CD8-positive, alpha-beta T cell (primary cell): ENCODE measurements at regions of chr12 and their contacts with region 1.

Region 1: GRCh38 chr12:7018350-7019042 is at the start of gene LPCAT3:
- DNase-seq: peak; percentile 94 to 99 (median 97)
- ATAC-seq: peak; percentile 97
- H3K4me3 ChIP-seq: peak within 1 kb of the TSS; percentile 82 to 99
- H3K4me3 Mint-ChIP-seq: peak within 1 kb of the TSS; percentile 90
- H3K27ac ChIP-seq: peak within 1 kb of the TSS; percentile 79 to 92
- H3K27ac Mint-ChIP-seq: peak within 1 kb of the TSS; percentile 88
- H3K4me1 ChIP-seq: peaks cover 13% of the 10 kb centered on the region
- H3K4me1 Mint-ChIP-seq: peaks cover 37% of the 10 kb centered on the region
- H3K27me3 ChIP-seq: no peaks in the 10 kb centered on the region
- H3K27me3 Mint-ChIP-seq: no peaks in the 10 kb centered on the region
- CTCF ChIP-seq: peak; percentile 85
- total RNA-seq, gene LPCAT3: 24.4 to 27.1 TPM

Region 2: DNA sequence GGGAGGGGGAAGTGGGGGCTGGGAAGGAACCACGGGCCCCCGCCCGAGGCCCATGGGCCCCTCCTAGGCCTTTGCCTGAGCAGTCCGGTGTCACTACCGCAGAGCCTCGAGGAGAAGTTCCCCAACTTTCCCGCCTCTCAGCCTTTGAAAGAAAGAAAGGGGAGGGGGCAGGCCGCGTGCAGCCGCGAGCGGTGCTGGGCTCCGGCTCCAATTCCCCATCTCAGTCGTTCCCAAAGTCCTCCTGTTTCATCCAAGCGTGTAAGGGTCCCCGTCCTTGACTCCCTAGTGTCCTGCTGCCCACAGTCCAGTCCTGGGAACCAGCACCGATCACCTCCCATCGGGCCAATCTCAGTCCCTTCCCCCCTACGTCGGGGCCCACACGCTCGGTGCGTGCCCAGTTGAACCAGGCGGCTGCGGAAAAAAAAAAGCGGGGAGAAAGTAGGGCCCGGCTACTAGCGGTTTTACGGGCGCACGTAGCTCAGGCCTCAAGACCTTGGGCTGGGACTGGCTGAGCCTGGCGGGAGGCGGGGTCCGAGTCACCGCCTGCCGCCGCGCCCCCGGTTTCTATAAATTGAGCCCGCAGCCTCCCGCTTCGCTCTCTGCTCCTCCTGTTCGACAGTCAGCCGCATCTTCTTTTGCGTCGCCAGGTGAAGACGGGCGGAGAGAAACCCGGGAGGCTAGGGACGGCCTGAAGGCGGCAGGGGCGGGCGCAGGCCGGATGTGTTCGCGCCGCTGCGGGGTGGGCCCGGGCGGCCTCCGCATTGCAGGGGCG is 484.4 kb before region 1 on chr12 and contains the start of gene GAPDH:
- CTCF ChIA-PET with region 1: no interaction called
- POLR2A ChIA-PET with region 1: no interaction called
- intact Hi-C with region 1: loop called in 1 of 2 experiments (anchors 2 kb)
- DNase-seq: peak; percentile 66 to 92 (median 84)
- ATAC-seq: no peak
- H3K4me3 ChIP-seq: peak within 1 kb of the TSS; percentile 85 to 94
- H3K4me3 Mint-ChIP-seq: peak within 1 kb of the TSS; percentile 87
- H3K27ac ChIP-seq: peak within 1 kb of the TSS; percentile 85 to 88
- H3K27ac Mint-ChIP-seq: peak within 1 kb of the TSS; percentile 96
- H3K4me1 ChIP-seq: peaks cover 47% of the 10 kb centered on the region
- H3K4me1 Mint-ChIP-seq: peaks cover 49% of the 10 kb centered on the region
- H3K27me3 ChIP-seq: no peaks in the 10 kb centered on the region
- H3K27me3 Mint-ChIP-seq: no peaks in the 10 kb centered on the region
- CTCF ChIP-seq: no peak
- total RNA-seq, gene GAPDH: 503 to 513 TPM

Region 3: DNA sequence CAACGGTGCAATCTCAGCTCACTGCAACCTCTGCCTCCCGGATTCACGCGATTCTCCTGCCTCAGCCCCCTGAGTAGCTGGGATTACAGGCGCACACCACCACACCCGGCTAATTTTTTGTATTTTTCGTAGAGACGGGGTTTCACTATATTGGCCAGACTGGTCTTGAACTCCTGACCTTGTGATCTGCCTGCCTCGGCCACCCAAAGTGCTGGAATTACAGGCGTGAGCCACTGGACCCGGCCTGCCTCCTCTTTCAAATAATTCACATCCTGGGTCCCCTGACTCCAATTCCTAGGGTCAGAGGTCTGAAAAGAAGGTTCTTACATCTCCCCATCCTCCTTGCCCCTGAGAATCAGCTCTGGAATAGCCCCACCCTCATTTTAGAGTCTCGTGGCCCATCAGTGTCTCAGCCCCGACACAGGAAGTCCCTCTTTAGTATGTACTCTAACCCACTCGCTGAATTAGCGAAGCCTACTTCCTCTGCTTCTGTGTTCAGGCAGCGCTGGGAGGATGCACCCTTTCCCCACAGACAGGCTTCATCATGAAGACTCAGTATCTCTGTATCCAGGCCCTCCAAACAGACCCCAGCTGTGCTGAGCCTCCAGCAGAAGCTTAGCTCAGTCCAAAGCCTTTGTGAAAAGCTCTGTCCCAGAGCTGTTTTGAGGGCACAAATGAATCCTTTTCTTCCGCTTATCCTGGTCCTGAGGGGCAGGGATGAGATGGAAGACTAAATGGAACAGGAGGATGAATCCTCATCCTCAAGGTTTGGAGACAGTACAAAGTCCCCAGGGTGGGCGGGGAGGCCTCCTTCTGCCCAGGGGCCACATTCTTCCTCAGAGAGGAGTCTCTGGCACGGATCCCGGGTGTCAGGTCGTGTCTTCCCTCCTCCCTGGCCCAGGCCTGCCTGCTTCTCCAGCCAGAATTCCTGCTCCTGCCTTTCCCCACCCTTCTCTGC is 386.2 kb before region 1 on chr12:
- CTCF ChIA-PET with region 1: no interaction called
- POLR2A ChIA-PET with region 1: no interaction called
- intact Hi-C with region 1: no loop called
- DNase-seq: peak in 8 of 9 experiments; percentile 46 to 83 (median 66)
- ATAC-seq: peak; percentile 57
- H3K4me3 ChIP-seq: peak overlapping the region; percentile 58 to 68
- H3K4me3 Mint-ChIP-seq: peak overlapping the region; percentile 83
- H3K27ac ChIP-seq: peak overlapping the region; percentile 60 to 87
- H3K27ac Mint-ChIP-seq: peak overlapping the region; percentile 98
- H3K4me1 ChIP-seq: peaks cover 70% of the 10 kb centered on the region
- H3K4me1 Mint-ChIP-seq: peaks cover 66% of the 10 kb centered on the region
- H3K27me3 ChIP-seq: no peaks in the 10 kb centered on the region
- H3K27me3 Mint-ChIP-seq: no peaks in the 10 kb centered on the region
- CTCF ChIP-seq: no peak

Region 4: DNA sequence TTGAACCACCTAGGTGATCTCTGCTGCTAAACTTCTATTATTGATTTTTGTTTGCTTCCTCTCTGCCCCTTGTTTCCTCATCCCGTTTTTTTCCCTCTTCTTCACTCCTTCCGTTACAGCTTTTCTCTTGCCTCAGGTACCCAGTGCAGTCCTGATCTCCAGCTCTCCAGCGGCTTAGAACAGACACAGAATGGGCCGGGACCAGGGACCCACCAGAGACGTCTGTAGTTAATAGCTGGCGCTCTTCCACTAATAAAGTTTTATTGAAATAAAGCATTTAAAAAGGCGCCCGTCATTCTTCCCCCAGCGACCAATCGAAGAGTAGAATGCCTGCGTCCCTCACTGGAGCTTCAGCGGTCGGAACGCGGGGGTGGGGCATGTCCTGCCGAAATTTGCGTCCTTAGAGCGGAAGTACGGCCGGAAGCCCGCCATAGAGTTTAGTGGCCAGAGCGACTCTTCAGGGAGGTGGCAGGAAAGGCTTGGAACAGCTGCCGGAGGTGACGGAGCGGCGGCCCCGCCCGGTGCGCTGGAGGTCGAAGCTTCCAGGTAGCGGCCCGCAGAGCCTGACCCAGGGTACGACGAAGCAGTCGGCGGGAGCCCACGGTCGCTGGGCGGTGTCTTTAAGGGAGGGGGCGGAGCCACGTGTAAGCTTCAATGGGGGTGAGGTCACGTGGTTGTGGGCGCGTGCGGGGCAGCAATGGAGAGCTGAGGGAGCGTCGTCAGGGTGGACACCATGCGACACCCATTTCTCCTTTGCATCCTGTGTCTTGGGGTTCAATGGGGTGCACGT is 294.7 kb before region 1 on chr12 and contains the start of gene COPS7A:
- CTCF ChIA-PET with region 1: no interaction called
- POLR2A ChIA-PET with region 1: no interaction called
- intact Hi-C with region 1: loop called (anchors 5 to 10 kb)
- DNase-seq: peak; percentile 83 to 98 (median 97)
- ATAC-seq: peak; percentile 85
- H3K4me3 ChIP-seq: peak within 1 kb of the TSS; percentile 59 to 68
- H3K4me3 Mint-ChIP-seq: peak within 1 kb of the TSS; percentile 83
- H3K27ac ChIP-seq: peak within 1 kb of the TSS; percentile 67 to 92
- H3K27ac Mint-ChIP-seq: peak within 1 kb of the TSS; percentile 94
- H3K4me1 ChIP-seq: peaks cover 19% of the 10 kb centered on the region
- H3K4me1 Mint-ChIP-seq: peaks cover 27% of the 10 kb centered on the region
- H3K27me3 ChIP-seq: no peaks in the 10 kb centered on the region
- H3K27me3 Mint-ChIP-seq: no peaks in the 10 kb centered on the region
- CTCF ChIP-seq: peak; percentile 28
- total RNA-seq, gene COPS7A: 11.0 to 11.1 TPM

Region 5: DNA sequence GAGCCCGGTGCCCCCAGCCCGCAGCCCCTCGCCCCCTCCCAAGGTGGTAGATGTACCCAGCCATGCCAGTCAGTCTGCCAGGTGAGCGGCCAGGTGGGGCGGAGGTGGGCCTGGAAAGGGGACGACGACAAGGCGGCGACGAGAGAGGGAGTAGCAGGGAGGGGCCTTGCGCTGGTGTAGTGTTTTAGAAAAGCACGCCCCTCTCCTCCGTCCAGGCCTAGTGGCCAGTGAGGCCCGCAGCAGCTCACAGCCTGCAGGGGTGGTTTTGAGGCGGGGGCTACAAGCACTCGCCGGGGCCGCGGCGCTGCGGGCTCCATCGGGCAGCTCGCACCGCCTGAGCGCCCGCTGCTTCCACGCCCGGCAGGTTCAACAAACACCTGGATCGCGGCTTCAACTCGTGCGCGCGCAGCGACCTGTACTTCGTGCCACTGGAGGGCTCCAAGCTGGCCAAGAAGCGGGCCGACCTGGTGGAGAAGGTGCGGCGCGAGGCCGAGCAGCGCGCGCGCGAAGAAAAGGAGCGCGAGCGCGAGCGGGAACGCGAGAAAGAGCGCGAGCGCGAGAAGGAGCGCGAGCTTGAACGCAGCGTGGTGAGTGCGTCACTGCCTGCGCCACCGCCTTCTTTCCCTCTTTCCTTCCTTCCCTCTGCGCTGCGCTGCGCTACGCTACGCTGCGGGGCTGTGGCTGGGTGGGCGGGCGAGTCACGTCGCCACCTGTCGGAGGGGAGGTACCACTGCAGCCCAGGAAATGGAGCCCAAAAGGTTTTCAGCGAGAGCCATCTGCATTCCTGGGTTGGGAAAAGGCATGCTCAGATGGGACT is 80.8 kb before region 1 on chr12:
- CTCF ChIA-PET with region 1: no interaction called
- POLR2A ChIA-PET with region 1: interaction called, 16 read pairs
- intact Hi-C with region 1: loop called in 1 of 2 experiments (anchors 2 kb)
- DNase-seq: peak; percentile 84 to 99 (median 92)
- ATAC-seq: peak; percentile 91
- H3K4me3 ChIP-seq: peak overlapping the region; percentile 60 to 91
- H3K4me3 Mint-ChIP-seq: peak overlapping the region; percentile 83
- H3K27ac ChIP-seq: peak overlapping the region; percentile 89 to 91
- H3K27ac Mint-ChIP-seq: peak overlapping the region; percentile 96
- H3K4me1 ChIP-seq: peaks cover 25% of the 10 kb centered on the region
- H3K4me1 Mint-ChIP-seq: peaks cover 48% of the 10 kb centered on the region
- H3K27me3 ChIP-seq: no peaks in the 10 kb centered on the region
- H3K27me3 Mint-ChIP-seq: no peaks in the 10 kb centered on the region
- CTCF ChIP-seq: peak; percentile 90

Region 6: DNA sequence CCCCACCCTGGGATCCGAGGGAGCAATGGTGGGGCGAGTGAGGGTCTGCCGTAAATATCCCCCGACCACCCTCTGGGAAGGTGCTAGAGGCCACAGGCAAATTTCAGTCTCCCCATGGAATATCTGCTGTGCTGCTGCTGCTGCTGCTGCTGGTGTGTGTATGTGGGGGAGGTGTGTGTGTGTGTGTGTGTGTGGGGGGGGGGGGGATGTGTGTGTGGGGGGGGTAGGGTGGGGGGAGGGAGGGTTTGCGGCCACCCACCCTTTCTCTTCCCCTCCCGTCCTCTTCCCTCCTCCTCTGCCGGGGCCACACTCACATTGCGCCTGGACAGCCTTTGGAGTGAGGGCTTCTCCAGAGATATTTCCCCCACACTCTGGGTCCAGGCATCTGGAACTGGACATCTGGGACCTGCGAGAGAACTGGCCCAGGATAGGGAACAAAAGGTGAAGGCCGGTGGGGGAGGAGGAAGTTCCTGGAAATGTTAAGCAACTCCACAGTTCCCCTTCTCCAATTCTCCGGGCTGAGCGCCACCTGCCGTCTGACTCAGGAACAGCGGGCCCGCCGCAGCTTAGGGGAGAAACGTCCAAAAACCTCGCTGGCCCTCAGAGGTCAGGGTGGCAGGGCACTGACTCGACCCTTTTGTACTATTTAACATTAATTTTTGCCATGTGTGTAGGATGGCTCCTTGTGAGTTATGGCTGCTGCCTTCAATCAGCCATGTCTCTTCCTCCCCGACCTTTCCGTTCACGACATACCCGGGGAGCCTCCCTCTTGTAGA is 90.5 kb after region 1 on chr12 and contains the start of gene C1RL:
- CTCF ChIA-PET with region 1: interaction called, 7 read pairs
- POLR2A ChIA-PET with region 1: interaction called, 8 read pairs
- intact Hi-C with region 1: loop called (anchors 1 to 5 kb)
- DNase-seq: peak; percentile 58 to 85 (median 77)
- ATAC-seq: peak; percentile 46
- H3K4me3 ChIP-seq: peak within 1 kb of the TSS; percentile 88 to 97
- H3K4me3 Mint-ChIP-seq: peak within 1 kb of the TSS; percentile 94
- H3K27ac ChIP-seq: peak within 1 kb of the TSS; percentile 67 to 80
- H3K27ac Mint-ChIP-seq: peak within 1 kb of the TSS; percentile 93
- H3K4me1 ChIP-seq: peaks cover 16% of the 10 kb centered on the region
- H3K4me1 Mint-ChIP-seq: peaks cover 44% of the 10 kb centered on the region
- H3K27me3 ChIP-seq: no peaks in the 10 kb centered on the region
- H3K27me3 Mint-ChIP-seq: no peaks in the 10 kb centered on the region
- CTCF ChIP-seq: peak; percentile 90
- total RNA-seq, gene C1RL: 8.0 to 9.0 TPM

Region 7: DNA sequence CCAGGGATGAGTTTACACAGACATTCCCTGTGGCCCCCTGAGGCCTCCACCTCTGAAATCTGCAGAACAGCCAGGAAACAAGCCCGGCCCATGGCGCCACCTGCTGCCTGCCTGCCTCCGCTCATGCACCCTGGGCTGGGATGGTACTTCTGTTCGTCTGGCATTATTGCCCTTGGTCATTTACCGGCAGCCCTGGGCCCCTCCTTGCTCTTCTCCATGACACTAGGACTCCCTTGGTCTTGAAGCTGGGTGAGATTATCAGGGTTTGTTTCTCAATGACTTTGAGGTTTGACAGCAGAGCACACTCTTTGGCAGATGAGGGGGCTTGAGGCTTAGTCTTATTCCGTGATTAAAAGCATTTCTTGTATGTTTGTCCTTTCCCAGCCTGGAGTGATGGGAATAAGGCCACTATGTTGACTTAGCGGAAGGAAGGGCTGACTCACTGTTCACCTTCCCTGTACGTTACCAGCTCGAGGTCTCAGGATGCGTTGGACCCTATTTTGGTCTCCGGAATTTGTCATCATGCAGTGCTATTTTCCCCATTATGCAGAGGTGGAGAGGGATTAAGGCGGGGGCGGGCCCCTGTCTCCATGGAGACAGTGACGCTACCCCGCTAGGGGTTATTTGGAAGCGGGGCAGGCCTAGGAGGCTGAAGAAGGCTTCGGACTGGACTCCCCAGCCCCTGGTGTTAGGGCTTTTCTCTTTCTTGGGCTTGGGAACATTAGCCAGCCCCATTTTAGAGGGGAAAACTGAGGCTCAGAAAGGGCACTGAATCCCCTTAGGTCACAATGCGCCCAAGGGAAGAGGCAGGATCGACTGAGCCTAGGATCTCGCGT is 170.3 kb after region 1 on chr12:
- CTCF ChIA-PET with region 1: no interaction called
- POLR2A ChIA-PET with region 1: no interaction called
- intact Hi-C with region 1: loop called in 1 of 2 experiments (anchors 5 kb)
- DNase-seq: peak; percentile 36 to 76 (median 63)
- ATAC-seq: peak; percentile 32
- H3K4me3 ChIP-seq: peak overlapping the region; percentile 85 to 86
- H3K4me3 Mint-ChIP-seq: peak overlapping the region; percentile 95
- H3K27ac ChIP-seq: peak overlapping the region; percentile 66 to 90
- H3K27ac Mint-ChIP-seq: peak overlapping the region; percentile 97
- H3K4me1 ChIP-seq: peaks cover 26% of the 10 kb centered on the region
- H3K4me1 Mint-ChIP-seq: peaks cover 44% of the 10 kb centered on the region
- H3K27me3 ChIP-seq: no peaks in the 10 kb centered on the region
- H3K27me3 Mint-ChIP-seq: no peaks in the 10 kb centered on the region
- CTCF ChIP-seq: peak; percentile 63